Cardiac septum (tissue), 1 donor: ENCODE measurements at regions of chr16 and their contacts with region 1.

Region 1: DNA sequence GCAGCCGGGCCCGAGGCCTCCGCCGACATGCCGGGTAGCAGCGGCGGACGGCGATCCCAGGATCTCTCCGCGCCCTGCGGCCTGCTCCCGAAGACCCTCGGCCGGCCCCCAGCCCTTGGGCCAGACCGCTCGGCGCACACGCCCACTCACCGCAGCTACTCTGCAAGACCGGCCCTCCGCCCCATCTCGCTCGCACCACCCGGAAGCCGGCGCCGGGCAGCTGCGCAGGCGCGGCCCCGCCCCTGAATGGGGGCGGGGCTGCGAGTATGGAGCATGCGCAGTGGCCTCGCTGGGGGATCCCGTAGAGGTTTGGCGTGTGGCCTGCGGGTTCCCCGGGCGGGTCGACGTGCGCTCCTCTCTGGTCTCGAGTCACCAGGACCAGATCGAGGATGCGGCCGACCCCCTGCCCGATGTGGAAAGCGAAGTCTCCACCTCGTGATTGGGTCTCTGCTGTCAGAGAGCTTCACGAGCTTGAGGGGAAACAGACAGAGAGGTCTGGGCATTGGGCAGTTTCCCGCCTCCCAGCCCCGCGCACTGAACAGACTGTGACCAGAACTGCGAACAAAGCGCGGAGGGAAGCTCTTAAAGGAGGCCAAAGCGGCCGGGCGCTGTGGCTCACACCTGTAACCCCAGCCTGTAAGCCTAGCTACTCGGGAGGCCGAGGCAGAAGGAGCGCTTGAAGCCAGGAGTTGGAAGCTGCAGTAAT is at the start of gene KCTD13:
- DNase-seq: peak; percentile 95
- total RNA-seq, gene KCTD13: 10.7 TPM

Region 2: DNA sequence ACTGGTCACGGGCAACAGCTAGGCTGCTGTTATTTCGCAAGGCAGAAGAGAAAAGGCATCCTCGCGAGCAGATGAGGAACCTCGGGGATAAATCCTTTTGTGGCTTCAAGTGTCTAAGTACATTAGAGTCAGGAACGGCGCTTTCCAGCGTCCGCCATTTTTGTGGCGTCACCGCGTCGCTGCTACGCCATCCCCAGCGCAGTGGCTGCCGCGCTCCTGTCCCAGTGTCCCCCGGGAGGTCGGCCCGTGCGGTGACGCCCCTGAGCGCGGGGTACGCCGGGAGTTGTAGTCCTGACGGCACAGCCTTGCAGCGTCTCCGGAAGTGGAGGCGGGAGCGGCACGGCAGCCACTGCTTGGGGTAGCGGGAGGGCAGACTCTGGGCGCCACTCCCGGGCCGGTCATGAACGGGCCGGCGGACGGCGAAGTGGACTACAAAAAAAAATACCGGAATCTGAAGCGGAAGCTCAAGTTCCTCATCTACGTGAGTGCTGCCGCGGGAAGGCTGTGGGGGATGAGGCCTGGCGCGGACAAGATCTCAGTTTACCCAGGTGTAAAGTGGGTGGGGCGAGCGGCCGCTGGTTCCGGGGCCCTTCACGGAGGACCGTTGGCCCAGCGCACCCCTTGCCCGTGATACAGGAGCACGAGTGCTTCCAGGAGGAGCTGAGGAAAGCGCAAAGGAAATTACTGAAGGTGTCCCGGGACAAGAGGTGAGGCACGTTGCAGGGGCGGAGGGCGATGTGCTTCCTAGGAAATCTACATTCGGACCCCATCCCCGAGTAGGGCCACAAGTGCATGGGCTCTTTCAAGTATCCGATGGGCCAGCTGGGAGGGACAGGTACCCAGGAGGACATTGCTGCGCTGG is 70.0 kb after region 1 on chr16 and contains the start of gene INO80E:
- intact Hi-C with region 1: loop called (anchors 5 kb)
- DNase-seq: peak; percentile 100
- total RNA-seq, gene INO80E: 36.8 TPM